ENCODE measurements at regions of chr15 and their contacts with region 1.

Region 1: GRCh38 chr15:22980189-22981050 is at the start of gene CYFIP1:
- DNase-seq: peak; percentile 91
- H3K4me3 ChIP-seq: peak within 1 kb of the TSS; percentile 66 to 88 (median 72)
- H3K27ac ChIP-seq: peak within 1 kb of the TSS; percentile 71
- H3K4me1 ChIP-seq: peaks cover 11% of the 10 kb centered on the region
- H3K27me3 ChIP-seq: no peaks in the 10 kb centered on the region
- CTCF ChIP-seq: no peak
- total RNA-seq, gene CYFIP1: 128 to 158 TPM

Region 2: GRCh38 chr15:22827125-22827524 is 153.3 kb before region 1 on chr15:
- CTCF ChIA-PET with region 1: no interaction called
- dilution Hi-C with region 1: no loop called
- in situ Hi-C with region 1: no loop called
- intact Hi-C with region 1: no loop called
- DNase-seq: no peak
- H3K4me3 ChIP-seq: no peak overlapping the region
- H3K27ac ChIP-seq: no peak overlapping the region
- H3K4me1 ChIP-seq: no peaks in the 10 kb centered on the region
- H3K27me3 ChIP-seq: no peaks in the 10 kb centered on the region
- CTCF ChIP-seq: no peak

Region 3: DNA sequence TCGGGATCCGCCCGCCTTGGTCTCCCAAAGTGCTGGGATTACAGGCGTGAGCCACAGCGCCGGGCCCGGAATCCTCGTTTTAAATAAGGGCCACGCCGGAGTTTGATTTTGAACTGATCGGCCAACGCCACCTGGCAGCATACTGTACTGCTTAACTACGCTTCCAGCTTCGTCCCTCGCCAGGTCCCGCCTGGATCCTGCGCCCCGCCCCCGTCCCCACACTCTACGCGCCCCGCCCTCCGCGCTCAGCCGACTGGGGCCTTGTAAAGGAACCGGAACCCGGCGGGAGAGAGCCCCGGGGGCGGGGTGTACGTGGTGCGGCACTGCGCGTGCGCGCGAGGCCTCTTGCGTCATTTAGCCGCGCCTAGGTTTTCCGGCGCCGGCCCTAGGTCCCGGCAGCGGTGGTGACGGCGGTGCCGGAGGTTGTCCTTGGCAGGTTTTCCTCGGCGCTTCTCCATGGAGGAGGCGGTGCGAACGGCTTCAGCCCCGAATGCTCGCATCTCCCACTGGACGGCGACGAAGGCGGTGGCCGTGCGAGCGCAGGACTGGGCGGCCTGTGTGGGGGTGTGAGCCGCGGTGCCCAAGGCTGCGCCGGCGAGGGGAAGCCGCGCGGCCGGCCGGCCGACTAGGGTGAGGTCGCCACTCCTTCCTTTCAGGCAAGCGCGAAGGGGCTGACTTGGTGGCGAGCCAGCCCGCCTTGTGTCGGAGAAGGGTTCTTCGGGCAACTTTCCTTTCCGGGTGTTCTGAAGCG is 142.0 kb before region 1 on chr15 and contains the start of gene NIPA2:
- CTCF ChIA-PET with region 1: no interaction called
- dilution Hi-C with region 1: no loop called
- in situ Hi-C with region 1: no loop called
- intact Hi-C with region 1: loop called (anchors 2 kb)
- DNase-seq: peak; percentile 98
- H3K4me3 ChIP-seq: peak within 1 kb of the TSS; percentile 56 to 98 (median 95)
- H3K27ac ChIP-seq: peak within 1 kb of the TSS; percentile 89
- H3K4me1 ChIP-seq: no peaks in the 10 kb centered on the region
- H3K27me3 ChIP-seq: no peaks in the 10 kb centered on the region
- CTCF ChIP-seq: no peak
- total RNA-seq, gene NIPA2: 58.5 to 61.9 TPM

Region 4: GRCh38 chr15:22884344-22884743 is 96.1 kb before region 1 on chr15:
- CTCF ChIA-PET with region 1: no interaction called
- dilution Hi-C with region 1: loop called (anchors 5 kb)
- in situ Hi-C with region 1: no loop called
- intact Hi-C with region 1: no loop called
- DNase-seq: no peak
- H3K4me3 ChIP-seq: no peak overlapping the region
- H3K27ac ChIP-seq: no peak overlapping the region
- H3K4me1 ChIP-seq: peaks cover 10% of the 10 kb centered on the region
- H3K27me3 ChIP-seq: no peaks in the 10 kb centered on the region
- CTCF ChIP-seq: peak in 1 of 2 donors; percentile 16

Region 5: GRCh38 chr15:22895469-22896190 is 84.8 kb before region 1 on chr15:
- CTCF ChIA-PET with region 1: no interaction called
- dilution Hi-C with region 1: no loop called
- in situ Hi-C with region 1: no loop called
- intact Hi-C with region 1: loop called (anchors 1 kb)
- DNase-seq: peak; percentile 96
- H3K4me3 ChIP-seq: no peak overlapping the region
- H3K27ac ChIP-seq: peak overlapping the region; percentile 52
- H3K4me1 ChIP-seq: peaks cover 12% of the 10 kb centered on the region
- H3K27me3 ChIP-seq: no peaks in the 10 kb centered on the region
- CTCF ChIP-seq: peak; percentile 6 to 7

Region 6: GRCh38 chr15:22918056-22918455 is 62.4 kb before region 1 on chr15:
- CTCF ChIA-PET with region 1: no interaction called
- dilution Hi-C with region 1: no loop called
- in situ Hi-C with region 1: no loop called
- intact Hi-C with region 1: loop called (anchors 5 kb)
- DNase-seq: peak; percentile 77
- H3K4me3 ChIP-seq: no peak overlapping the region
- H3K27ac ChIP-seq: no peak overlapping the region
- H3K4me1 ChIP-seq: peaks cover 11% of the 10 kb centered on the region
- H3K27me3 ChIP-seq: no peaks in the 10 kb centered on the region
- CTCF ChIP-seq: no peak

Region 7: DNA sequence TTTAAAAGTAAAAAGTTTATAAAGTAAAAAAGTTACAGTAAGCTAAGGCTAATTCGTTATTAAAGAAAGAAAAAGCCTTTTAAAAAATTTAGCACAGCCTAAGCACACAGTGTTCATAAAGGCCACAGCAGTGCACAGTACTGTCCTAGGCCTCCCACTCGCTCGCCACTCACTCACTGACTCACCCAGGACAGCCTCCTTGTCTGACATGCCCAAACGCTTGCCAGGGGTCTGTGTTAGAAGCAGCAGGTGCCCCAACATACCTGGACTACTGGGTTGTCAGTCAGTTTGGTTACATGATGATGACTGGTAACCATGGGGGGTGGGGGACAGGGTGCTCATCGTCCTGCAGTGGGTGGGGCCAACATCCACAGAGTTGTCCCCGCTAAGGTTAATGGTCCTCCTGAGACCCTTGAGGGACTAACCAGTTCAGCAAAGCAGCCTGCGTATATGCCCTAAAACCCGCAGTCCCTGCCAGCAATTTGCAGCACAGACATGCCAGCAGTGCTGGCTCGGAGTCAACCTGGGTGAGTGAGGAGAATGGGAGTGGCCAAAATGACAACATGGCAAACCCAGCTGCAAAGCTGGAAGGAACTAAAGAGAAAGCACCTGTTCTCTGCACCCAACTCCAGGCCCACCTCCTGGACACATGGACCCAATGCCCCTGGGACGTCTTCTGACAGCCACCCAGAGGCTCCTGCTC is 49.5 kb before region 1 on chr15:
- CTCF ChIA-PET with region 1: no interaction called
- dilution Hi-C with region 1: no loop called
- in situ Hi-C with region 1: no loop called
- intact Hi-C with region 1: loop called (anchors 5 kb)
- DNase-seq: peak; percentile 62
- H3K4me3 ChIP-seq: no peak overlapping the region
- H3K27ac ChIP-seq: no peak overlapping the region
- H3K4me1 ChIP-seq: peaks cover 12% of the 10 kb centered on the region
- H3K27me3 ChIP-seq: no peaks in the 10 kb centered on the region
- CTCF ChIP-seq: no peak

Region 8: GRCh38 chr15:22968366-22968765 is 12.1 kb before region 1 on chr15:
- CTCF ChIA-PET with region 1: no interaction called
- dilution Hi-C with region 1: no loop called
- in situ Hi-C with region 1: no loop called
- intact Hi-C with region 1: loop called (anchors 1 kb)
- DNase-seq: peak; percentile 89
- H3K4me3 ChIP-seq: no peak overlapping the region
- H3K27ac ChIP-seq: peak overlapping the region; percentile 51
- H3K4me1 ChIP-seq: peaks cover 30% of the 10 kb centered on the region
- H3K27me3 ChIP-seq: no peaks in the 10 kb centered on the region
- CTCF ChIP-seq: no peak